CD8-positive, alpha-beta T cell (primary cell): ENCODE measurements at regions of chr18 and their contacts with region 1.

Region 1: GRCh38 chr18:13530879-13531387 is 195.4 kb downstream of the FAM210A start:
- DNase-seq: peak in 3 of 9 experiments; percentile 18 to 55 (median 39)
- ATAC-seq: peak; percentile 23
- H3K4me3 ChIP-seq: no peak overlapping the region
- H3K4me3 Mint-ChIP-seq: no peak overlapping the region
- H3K27ac ChIP-seq: no peak overlapping the region
- H3K27ac Mint-ChIP-seq: peak overlapping the region; percentile 11
- H3K4me1 ChIP-seq: peaks cover 12% of the 10 kb centered on the region
- H3K4me1 Mint-ChIP-seq: peaks cover 54% of the 10 kb centered on the region
- H3K27me3 ChIP-seq: no peaks in the 10 kb centered on the region
- H3K27me3 Mint-ChIP-seq: no peaks in the 10 kb centered on the region
- CTCF ChIP-seq: no peak

Region 2: DNA sequence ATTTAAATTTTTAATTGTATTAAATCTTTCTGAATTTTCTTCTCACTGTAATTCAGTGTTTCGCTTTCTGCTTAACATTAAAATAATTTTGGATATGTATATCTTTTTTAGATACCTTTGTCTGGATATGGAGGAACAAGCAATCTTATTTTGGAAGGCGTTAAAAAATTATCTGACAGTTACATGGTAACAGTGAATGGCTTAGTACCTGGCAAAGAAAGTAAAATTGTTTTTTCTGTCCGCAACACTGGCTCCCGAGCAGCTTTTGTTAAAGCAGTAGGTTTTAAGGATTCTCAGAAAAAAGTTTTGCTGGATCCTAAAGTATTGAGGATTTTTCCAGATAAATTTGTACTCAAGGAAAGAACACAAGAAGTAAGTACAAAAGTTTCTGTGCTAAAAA is 444.0 kb before region 1 on chr18:
- CTCF ChIA-PET with region 1: no interaction called
- POLR2A ChIA-PET with region 1: no interaction called
- intact Hi-C with region 1: no loop called
- DNase-seq: no peak
- ATAC-seq: no peak
- H3K4me3 ChIP-seq: no peak overlapping the region
- H3K4me3 Mint-ChIP-seq: no peak overlapping the region
- H3K27ac ChIP-seq: no peak overlapping the region
- H3K27ac Mint-ChIP-seq: no peak overlapping the region
- H3K4me1 ChIP-seq: no peaks in the 10 kb centered on the region
- H3K4me1 Mint-ChIP-seq: peaks cover 11% of the 10 kb centered on the region
- H3K27me3 ChIP-seq: no peaks in the 10 kb centered on the region
- H3K27me3 Mint-ChIP-seq: no peaks in the 10 kb centered on the region
- CTCF ChIP-seq: no peak

Region 3: GRCh38 chr18:13136904-13137669 is 393.8 kb before region 1 on chr18:
- CTCF ChIA-PET with region 1: no interaction called
- POLR2A ChIA-PET with region 1: no interaction called
- intact Hi-C with region 1: no loop called
- DNase-seq: peak in 8 of 9 experiments; percentile 21 to 79 (median 48)
- ATAC-seq: peak; percentile 41
- H3K4me3 ChIP-seq: peak overlapping the region; percentile 84 to 98
- H3K4me3 Mint-ChIP-seq: peak overlapping the region; percentile 94
- H3K27ac ChIP-seq: peak overlapping the region; percentile 87 to 90
- H3K27ac Mint-ChIP-seq: peak overlapping the region; percentile 96
- H3K4me1 ChIP-seq: peaks cover 20% of the 10 kb centered on the region
- H3K4me1 Mint-ChIP-seq: peaks cover 28% of the 10 kb centered on the region
- H3K27me3 ChIP-seq: no peaks in the 10 kb centered on the region
- H3K27me3 Mint-ChIP-seq: no peaks in the 10 kb centered on the region
- CTCF ChIP-seq: no peak

Region 4: DNA sequence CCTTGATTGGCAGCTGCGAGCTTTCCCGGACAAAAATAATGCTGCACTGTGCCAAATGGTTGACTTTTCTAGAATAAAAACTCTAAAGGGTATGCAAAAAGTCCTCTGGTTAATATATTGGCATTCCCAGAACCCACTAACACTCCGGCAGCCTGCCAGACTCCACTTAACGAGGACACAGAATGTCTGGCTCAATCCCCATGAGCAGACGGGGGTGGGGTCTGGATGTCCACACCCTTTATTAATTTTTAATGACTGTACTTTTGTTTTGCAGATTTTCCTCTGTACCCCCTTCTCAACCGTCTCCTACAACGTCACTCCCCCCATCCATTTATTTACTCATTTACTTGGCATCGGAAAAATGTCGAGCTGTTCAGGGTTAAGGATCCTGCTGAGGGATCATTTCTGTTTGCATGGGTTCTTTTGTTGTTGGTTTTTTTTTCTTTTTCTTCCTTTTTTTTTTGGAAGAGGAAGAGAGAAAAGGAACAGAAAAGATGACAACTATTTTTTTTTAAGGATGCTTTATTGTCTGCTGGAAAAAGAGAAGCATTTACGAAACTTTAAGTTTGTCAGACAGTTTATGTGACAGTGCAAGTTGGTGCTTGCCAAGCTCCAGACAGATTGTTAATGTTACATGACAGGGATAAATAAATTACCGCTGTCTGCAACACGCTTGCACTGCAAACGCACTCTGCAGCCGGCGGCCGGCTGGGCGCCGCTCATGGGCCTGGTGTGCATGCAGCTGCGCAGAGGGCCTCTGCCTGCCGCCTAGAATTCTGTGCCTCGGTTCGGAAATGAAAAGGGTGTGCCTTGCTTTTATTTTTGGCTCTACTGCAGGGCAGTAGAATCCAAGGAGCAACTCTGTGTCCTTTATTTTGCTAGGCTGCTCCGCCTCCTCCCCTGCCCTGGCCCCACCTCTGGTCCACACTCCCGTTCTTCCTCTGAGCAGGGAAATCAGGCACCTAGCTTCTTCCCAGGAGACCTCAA is 308.8 kb before region 1 on chr18:
- CTCF ChIA-PET with region 1: no interaction called
- POLR2A ChIA-PET with region 1: no interaction called
- intact Hi-C with region 1: loop called (anchors 1 to 5 kb)
- DNase-seq: no peak
- ATAC-seq: no peak
- H3K4me3 ChIP-seq: no peak overlapping the region
- H3K4me3 Mint-ChIP-seq: peak overlapping the region; percentile 13
- H3K27ac ChIP-seq: no peak overlapping the region
- H3K27ac Mint-ChIP-seq: peak overlapping the region; percentile 28
- H3K4me1 ChIP-seq: peaks cover 28% of the 10 kb centered on the region
- H3K4me1 Mint-ChIP-seq: peaks cover 35% of the 10 kb centered on the region
- H3K27me3 ChIP-seq: peaks cover 0 to 3% of the 10 kb centered on the region in 2 experiments
- H3K27me3 Mint-ChIP-seq: peaks cover 2% of the 10 kb centered on the region
- CTCF ChIP-seq: no peak

Region 5: GRCh38 chr18:13577091-13577697 is 46.3 kb after region 1 on chr18:
- CTCF ChIA-PET with region 1: no interaction called
- POLR2A ChIA-PET with region 1: interaction called, 4 read pairs
- intact Hi-C with region 1: loop called in 1 of 2 experiments (anchors 1 kb)
- DNase-seq: peak in 3 of 9 experiments; percentile 10 to 39 (median 35)
- ATAC-seq: peak; percentile 78
- H3K4me3 ChIP-seq: no peak overlapping the region
- H3K4me3 Mint-ChIP-seq: peak overlapping the region; percentile 69
- H3K27ac ChIP-seq: no peak overlapping the region
- H3K27ac Mint-ChIP-seq: peak overlapping the region; percentile 24
- H3K4me1 ChIP-seq: peaks cover 25% of the 10 kb centered on the region
- H3K4me1 Mint-ChIP-seq: peaks cover 40% of the 10 kb centered on the region
- H3K27me3 ChIP-seq: no peaks in the 10 kb centered on the region
- H3K27me3 Mint-ChIP-seq: no peaks in the 10 kb centered on the region
- CTCF ChIP-seq: no peak

Region 6: GRCh38 chr18:13878858-13879257 is 347.9 kb after region 1 on chr18:
- CTCF ChIA-PET with region 1: no interaction called
- POLR2A ChIA-PET with region 1: no interaction called
- intact Hi-C with region 1: no loop called
- DNase-seq: no peak
- ATAC-seq: no peak
- H3K4me3 ChIP-seq: no peak overlapping the region
- H3K4me3 Mint-ChIP-seq: no peak overlapping the region
- H3K27ac ChIP-seq: no peak overlapping the region
- H3K27ac Mint-ChIP-seq: no peak overlapping the region
- H3K4me1 ChIP-seq: no peaks in the 10 kb centered on the region
- H3K4me1 Mint-ChIP-seq: no peaks in the 10 kb centered on the region
- H3K27me3 ChIP-seq: no peaks in the 10 kb centered on the region
- H3K27me3 Mint-ChIP-seq: peaks cover 2% of the 10 kb centered on the region
- CTCF ChIP-seq: no peak